Heart left ventricle (tissue), 16 donors: ENCODE measurements at regions of chr17 and their contacts with region 1.

Region 1: GRCh38 chr17:66567234-66568170 is 265.1 kb downstream of the PRKCA start:
- DNase-seq: peak; percentile 69 to 86 (median 70)
- ATAC-seq: peak; percentile 61 to 86 (median 82)
- H3K4me3 ChIP-seq: no peak overlapping the region
- H3K27ac ChIP-seq: no peak overlapping the region
- H3K4me1 ChIP-seq: peaks cover 0 to 8% (median 0%) of the 10 kb centered on the region in 12 donors
- H3K27me3 ChIP-seq: no peaks in the 10 kb centered on the region
- CTCF ChIP-seq: peak; percentile 64 to 81 (median 75)
- POLR2A ChIP-seq: no peak

Region 2: GRCh38 chr17:66200685-66201092 is 366.8 kb before region 1 on chr17:
- intact Hi-C with region 1: loop called in 5 of 10 experiments (anchors 2 to 10 kb)
- DNase-seq: peak in 3 of 5 donors; percentile 14 to 42 (median 36)
- ATAC-seq: peak in 2 of 4 donors; percentile 18 to 46
- H3K4me3 ChIP-seq: no peak overlapping the region
- H3K27ac ChIP-seq: no peak overlapping the region
- H3K4me1 ChIP-seq: no peaks in the 10 kb centered on the region
- H3K27me3 ChIP-seq: no peaks in the 10 kb centered on the region
- CTCF ChIP-seq: peak; percentile 32 to 63 (median 46)
- POLR2A ChIP-seq: no peak

Region 3: DNA sequence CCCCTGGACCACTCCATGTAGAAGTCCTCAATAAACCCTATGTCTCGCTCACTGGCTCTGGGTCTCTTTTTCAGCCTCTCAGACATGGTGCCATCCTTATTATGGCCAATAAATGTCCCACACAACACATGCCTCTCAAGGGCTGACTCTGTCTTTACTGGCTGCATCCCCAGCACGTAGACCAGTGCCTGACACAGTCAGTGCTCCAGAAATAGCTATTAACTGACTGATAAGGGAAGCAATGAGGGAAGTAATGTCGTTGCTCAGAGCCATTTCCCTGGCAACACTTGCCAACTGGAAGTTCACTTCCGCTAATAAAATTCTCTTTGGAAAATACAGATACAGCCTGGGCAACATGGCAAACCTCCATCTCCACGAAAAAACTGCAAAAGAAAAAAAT is 319.2 kb before region 1 on chr17:
- intact Hi-C with region 1: loop called in 2 of 10 experiments (anchors 5 to 10 kb)
- DNase-seq: peak in 2 of 5 donors; percentile 35 to 48
- ATAC-seq: peak; percentile 73 to 95 (median 90)
- H3K4me3 ChIP-seq: no peak overlapping the region
- H3K27ac ChIP-seq: peak overlapping the region in 1 of 12 donors; percentile 22
- H3K4me1 ChIP-seq: peaks cover 0 to 6% (median 0%) of the 10 kb centered on the region in 12 donors
- H3K27me3 ChIP-seq: no peaks in the 10 kb centered on the region
- CTCF ChIP-seq: no peak
- POLR2A ChIP-seq: no peak

Region 4: GRCh38 chr17:66255112-66255511 is 312.4 kb before region 1 on chr17:
- intact Hi-C with region 1: loop called in 9 of 10 experiments (anchors 1 to 10 kb)
- DNase-seq: peak in 1 of 5 donors; percentile 11
- ATAC-seq: peak in 3 of 4 donors; percentile 79 to 85 (median 80)
- H3K4me3 ChIP-seq: no peak overlapping the region
- H3K27ac ChIP-seq: no peak overlapping the region
- H3K4me1 ChIP-seq: no peaks in the 10 kb centered on the region
- H3K27me3 ChIP-seq: no peaks in the 10 kb centered on the region
- CTCF ChIP-seq: peak; percentile 39 to 83 (median 70)
- POLR2A ChIP-seq: no peak

Region 5: DNA sequence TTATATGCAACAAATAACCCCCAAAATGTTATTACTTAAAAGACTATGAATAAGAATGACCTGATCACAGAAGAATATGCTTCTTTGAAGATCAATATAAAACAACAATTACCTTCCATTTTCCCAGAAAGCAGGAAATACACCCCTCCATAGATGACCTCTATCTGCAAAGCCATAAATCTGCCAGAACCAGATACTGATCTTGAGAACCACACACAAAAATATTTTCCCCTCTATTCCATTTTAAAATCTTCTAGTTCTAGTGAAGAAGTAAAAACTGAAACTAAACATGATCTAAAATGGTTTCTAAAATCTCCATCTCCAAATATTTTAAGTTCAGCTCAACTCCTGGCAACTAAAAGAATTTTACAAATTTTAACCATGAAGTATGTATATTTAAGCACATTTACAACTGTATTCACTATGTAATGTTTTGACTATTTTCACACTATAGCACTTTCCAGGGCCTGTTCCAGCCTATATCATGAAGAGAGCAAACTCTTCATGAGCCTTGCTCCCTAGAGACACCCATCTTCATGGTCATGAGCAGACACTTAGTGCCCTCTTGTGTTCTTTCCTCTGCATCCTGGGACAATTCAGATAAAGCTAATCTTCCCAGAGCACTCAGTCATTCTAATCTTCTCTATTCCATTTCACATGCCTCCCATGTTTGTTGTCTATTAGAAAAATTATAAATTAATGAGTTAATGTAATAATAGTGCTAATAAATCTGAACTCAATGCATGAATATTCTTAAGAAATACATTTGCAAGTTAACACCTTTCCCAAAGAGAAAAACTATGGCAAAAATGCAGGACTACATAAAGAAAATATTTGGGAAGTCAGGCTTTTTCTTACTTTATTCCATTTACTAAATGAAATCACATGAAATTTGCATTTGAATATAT is 590.5 kb after region 1 on chr17:
- intact Hi-C with region 1: no loop called
- DNase-seq: no peak
- ATAC-seq: peak in 3 of 4 donors; percentile 69 to 72 (median 69)
- H3K4me3 ChIP-seq: no peak overlapping the region
- H3K27ac ChIP-seq: no peak overlapping the region
- H3K4me1 ChIP-seq: peaks cover 0 to 5% (median 0%) of the 10 kb centered on the region in 12 donors
- H3K27me3 ChIP-seq: no peaks in the 10 kb centered on the region
- CTCF ChIP-seq: peak in 6 of 12 donors; percentile 13 to 42 (median 31)
- POLR2A ChIP-seq: no peak